ENCODE measurements at regions of chr16 and their contacts with region 1.

Region 1: DNA sequence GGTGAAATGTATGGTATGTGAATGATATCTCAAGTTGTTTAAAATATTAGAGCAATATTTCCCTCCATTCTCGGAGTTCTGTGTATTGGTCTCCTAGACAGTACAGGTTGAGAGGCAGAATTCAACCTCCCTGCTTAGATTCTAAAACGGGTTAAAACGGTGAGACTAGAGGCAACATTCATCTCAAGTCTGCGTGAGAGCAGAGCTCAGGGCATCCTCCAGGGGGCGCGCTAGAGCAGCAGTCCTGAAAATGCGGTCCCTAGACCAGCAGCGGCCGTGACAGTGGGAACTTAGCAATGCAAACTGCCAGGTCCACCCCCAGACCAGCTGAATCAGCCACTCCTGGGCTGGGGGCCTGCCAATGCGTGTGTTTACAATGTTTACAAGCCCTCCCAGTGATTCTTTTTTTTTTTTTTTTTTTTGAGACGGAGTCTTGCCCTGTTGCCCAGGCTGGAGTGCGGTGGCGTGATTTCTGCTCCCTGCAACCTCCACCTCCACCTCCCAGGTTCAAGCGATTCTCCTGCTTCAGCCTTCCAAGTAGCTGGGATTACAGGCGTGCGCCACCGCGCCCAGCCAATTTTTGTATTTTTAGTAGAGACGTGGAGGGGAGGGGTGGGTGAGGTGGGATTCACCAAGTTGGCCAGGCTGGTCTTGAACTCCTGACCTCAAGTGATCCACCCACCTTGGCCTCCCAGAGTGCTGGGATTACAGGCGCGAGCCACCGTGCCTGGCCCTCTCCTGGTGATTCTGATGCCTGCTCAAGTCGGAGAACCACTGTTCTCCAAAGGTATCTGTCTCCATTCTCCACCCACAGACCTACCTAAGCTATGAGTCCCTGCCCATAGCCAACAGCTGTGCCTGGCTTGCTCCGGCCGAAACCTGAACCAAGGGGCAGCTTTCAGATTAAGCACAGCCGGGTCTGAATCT is 24.2 kb downstream of the KLHL36 start:
- DNase-seq: peak; percentile 60 to 85
- ATAC-seq: peak; percentile 88

Region 2: DNA sequence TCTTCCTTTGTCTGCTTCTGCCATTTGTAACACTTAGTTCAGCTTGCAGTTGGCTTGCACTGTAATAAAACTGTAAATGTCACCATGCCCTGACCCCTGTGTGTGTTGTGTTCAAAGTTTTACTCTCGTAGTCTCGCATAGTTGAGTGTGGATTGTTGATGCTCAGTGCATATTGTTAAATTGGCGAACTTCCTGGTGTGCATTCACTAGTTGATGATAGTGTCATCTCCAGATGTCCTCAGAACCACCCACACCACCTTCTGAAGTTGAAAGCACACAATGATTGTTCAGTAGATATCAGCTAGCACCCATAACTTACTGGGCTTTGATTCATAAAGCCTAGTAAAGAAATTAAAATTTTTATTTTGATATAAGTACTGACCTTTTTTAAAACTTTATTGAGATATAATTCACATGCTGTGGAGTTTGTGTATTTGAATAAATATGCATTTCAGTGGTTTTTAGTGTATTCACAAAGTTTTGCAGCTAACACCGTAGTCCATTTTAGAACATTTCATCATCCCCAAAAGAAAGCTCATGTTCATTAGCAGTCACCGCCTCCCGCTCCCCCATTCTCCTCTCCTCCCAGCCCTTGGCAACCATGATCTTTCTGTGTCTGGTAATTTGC is 52.2 kb after region 1 on chr16:
- intact Hi-C with region 1: loop called in 1 of 2 experiments (anchors 2 kb)
- DNase-seq: no peak
- ATAC-seq: peak; percentile 72